Activated CD4-positive, alpha-beta T cell treated with anti-CD3 and anti-CD28 coated beads for 36 hours (primary cell): ENCODE measurements at regions of chr7 and their contacts with region 1.

Region 1: GRCh38 chr7:3106361-3106826 is 62.7 kb upstream of the CARD11 start:
- DNase-seq: peak; percentile 76
- ATAC-seq: peak; percentile 88
- H3K4me3 Mint-ChIP-seq: no peak overlapping the region
- H3K27ac Mint-ChIP-seq: peak overlapping the region; percentile 86
- H3K4me1 Mint-ChIP-seq: peaks cover 90% of the 10 kb centered on the region
- H3K27me3 Mint-ChIP-seq: no peaks in the 10 kb centered on the region

Region 2: DNA sequence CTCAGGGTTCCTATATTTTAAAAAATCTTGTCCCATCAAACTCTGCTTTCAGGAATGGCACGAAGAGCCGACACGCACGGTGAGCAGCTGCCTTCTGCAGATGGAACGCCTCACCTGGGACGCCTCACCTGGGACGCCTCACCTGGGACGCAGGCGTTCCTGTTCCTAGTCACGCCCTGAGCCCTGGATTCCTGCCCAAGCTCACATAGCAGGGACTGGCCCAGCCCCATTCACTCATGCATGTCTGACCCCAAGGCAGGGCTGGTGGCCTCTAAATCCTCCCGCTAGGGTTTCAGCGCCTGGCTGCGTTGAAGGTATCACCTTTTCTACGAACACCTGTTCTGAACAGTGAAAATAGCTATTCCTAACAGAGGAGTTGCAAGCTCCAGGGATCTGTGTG is 112.5 kb before region 1 on chr7:
- CTCF ChIA-PET with region 1: no interaction called
- POLR2A ChIA-PET with region 1: no interaction called
- intact Hi-C with region 1: no loop called
- DNase-seq: no peak
- ATAC-seq: no peak
- H3K4me3 Mint-ChIP-seq: no peak overlapping the region
- H3K27ac Mint-ChIP-seq: peak overlapping the region; percentile 13
- H3K4me1 Mint-ChIP-seq: peaks cover 8% of the 10 kb centered on the region
- H3K27me3 Mint-ChIP-seq: no peaks in the 10 kb centered on the region

Region 3: GRCh38 chr7:3028071-3028757 is 78.2 kb before region 1 on chr7:
- CTCF ChIA-PET with region 1: no interaction called
- POLR2A ChIA-PET with region 1: no interaction called
- intact Hi-C with region 1: loop called in 1 of 2 experiments (anchors 1 kb)
- DNase-seq: peak; percentile 84
- ATAC-seq: peak; percentile 95
- H3K4me3 Mint-ChIP-seq: peak overlapping the region; percentile 47
- H3K27ac Mint-ChIP-seq: peak overlapping the region; percentile 84
- H3K4me1 Mint-ChIP-seq: peaks cover 51% of the 10 kb centered on the region
- H3K27me3 Mint-ChIP-seq: no peaks in the 10 kb centered on the region

Region 4: GRCh38 chr7:3042861-3043489 is 63.4 kb before region 1 on chr7:
- CTCF ChIA-PET with region 1: no interaction called
- POLR2A ChIA-PET with region 1: no interaction called
- intact Hi-C with region 1: loop called in 1 of 2 experiments (anchors 1 kb)
- DNase-seq: peak; percentile 86
- ATAC-seq: peak; percentile 80
- H3K4me3 Mint-ChIP-seq: peak overlapping the region; percentile 97
- H3K27ac Mint-ChIP-seq: peak overlapping the region; percentile 97
- H3K4me1 Mint-ChIP-seq: peaks cover 55% of the 10 kb centered on the region
- H3K27me3 Mint-ChIP-seq: no peaks in the 10 kb centered on the region

Region 5: DNA sequence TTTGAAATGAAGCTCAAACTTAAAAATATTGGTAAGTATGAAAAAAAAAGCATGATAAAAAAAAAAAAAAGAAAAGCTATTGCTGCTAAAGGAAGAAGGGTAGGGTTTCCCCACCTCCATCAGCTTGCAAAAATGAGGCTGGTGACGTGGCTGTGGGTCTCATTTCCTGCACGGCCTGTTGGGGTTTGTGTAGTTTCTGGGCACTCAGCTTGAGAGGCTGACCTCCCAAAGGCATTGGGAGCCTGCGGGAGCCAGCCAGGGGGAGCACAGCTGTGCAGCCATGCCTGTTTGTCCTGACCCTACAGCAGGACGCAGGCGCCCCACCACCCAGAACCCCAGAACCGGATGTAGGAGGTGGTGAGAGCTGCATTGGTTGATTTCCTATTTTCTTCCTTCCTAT is 13.9 kb before region 1 on chr7:
- CTCF ChIA-PET with region 1: interaction called, 11 read pairs
- POLR2A ChIA-PET with region 1: interaction called, 5 read pairs
- intact Hi-C with region 1: loop called (anchors 1 kb)
- DNase-seq: peak; percentile 88
- ATAC-seq: peak; percentile 86
- H3K4me3 Mint-ChIP-seq: peak overlapping the region; percentile 32
- H3K27ac Mint-ChIP-seq: peak overlapping the region; percentile 89
- H3K4me1 Mint-ChIP-seq: peaks cover 67% of the 10 kb centered on the region
- H3K27me3 Mint-ChIP-seq: no peaks in the 10 kb centered on the region

Region 6: DNA sequence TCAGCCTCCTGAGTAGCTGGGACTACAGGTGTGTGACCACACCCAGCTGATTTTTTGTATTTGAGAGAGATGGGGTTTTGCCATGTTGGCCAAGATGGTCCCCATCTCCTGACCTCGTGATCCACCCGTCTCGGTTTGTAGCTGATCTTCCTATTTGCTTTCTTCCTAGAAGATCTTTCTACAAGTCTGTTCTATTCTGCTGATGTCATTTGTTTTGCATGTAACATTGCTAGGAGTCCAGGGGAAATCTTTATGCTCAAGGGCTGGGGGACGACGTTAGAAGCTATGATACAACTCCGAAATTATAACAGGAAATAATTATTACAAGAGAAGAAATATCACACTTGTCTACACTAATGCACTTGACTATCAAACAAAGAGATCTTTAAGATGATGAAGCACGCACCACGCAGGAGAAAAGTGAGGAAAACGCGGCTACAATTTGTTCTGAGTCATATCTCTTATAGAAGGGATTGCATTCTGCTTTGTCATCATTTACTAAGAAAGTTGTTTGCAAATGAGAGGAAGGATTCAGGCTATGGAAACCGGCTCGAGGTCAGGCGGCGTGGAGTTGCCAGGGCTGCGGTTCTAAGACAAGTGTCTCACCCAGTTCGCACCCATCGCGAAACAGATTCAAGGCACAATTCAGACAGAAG is 40.3 kb after region 1 on chr7:
- CTCF ChIA-PET with region 1: no interaction called
- POLR2A ChIA-PET with region 1: no interaction called
- intact Hi-C with region 1: loop called in 1 of 2 experiments (anchors 5 kb)
- DNase-seq: peak; percentile 47
- ATAC-seq: peak; percentile 39
- H3K4me3 Mint-ChIP-seq: no peak overlapping the region
- H3K27ac Mint-ChIP-seq: no peak overlapping the region
- H3K4me1 Mint-ChIP-seq: peaks cover 13% of the 10 kb centered on the region
- H3K27me3 Mint-ChIP-seq: no peaks in the 10 kb centered on the region